ENCODE measurements at regions of chr14 and their contacts with region 1.

Region 1: GRCh38 chr14:100645192-100645990 is 58.2 kb upstream of the BEGAIN start:
- DNase-seq: peak; percentile 72 to 82
- ATAC-seq: peak; percentile 67 to 86 (median 80)
- H3K4me3 ChIP-seq: no peak overlapping the region
- H3K27ac ChIP-seq: no peak overlapping the region
- H3K4me1 ChIP-seq: no peaks in the 10 kb centered on the region
- H3K27me3 ChIP-seq: peaks cover 0 to 7% (median 2%) of the 10 kb centered on the region in 3 donors
- CTCF ChIP-seq: peak; percentile 61

Region 2: GRCh38 chr14:100383727-100384158 is 261.6 kb before region 1 on chr14:
- intact Hi-C with region 1: loop called (anchors 5 kb)
- DNase-seq: peak; percentile 55 to 72
- ATAC-seq: peak; percentile 67 to 87 (median 80)
- H3K4me3 ChIP-seq: no peak overlapping the region
- H3K27ac ChIP-seq: no peak overlapping the region
- H3K4me1 ChIP-seq: peaks cover 13% of the 10 kb centered on the region
- H3K27me3 ChIP-seq: no peaks in the 10 kb centered on the region
- CTCF ChIP-seq: peak; percentile 77

Region 3: DNA sequence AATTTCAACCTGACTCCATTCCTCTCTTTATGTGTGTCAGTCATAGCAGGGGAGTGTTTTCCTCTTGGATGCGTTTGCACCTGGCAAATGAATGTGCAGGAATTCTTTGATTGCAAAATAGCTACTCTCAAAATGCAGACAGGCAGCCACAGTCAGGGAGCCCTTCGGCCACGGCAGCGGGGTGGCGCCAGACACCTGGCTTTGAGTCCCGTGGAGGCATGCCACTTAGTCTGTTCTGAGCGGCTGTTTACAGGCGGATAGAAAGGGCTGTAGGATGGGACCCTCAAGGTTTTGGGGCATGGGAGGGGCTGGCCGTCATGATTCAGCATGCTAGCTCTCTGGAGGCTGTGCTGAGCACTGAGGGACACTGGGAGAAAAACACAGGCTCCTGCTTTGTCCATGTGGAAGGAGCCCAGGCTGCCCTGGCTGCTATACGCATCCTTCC is 205.2 kb before region 1 on chr14:
- intact Hi-C with region 1: loop called (anchors 1 to 5 kb)
- DNase-seq: peak; percentile 76 to 86
- ATAC-seq: peak; percentile 93 to 98 (median 96)
- H3K4me3 ChIP-seq: no peak overlapping the region
- H3K27ac ChIP-seq: peak overlapping the region; percentile 21
- H3K4me1 ChIP-seq: peaks cover 16% of the 10 kb centered on the region
- H3K27me3 ChIP-seq: no peaks in the 10 kb centered on the region
- CTCF ChIP-seq: peak; percentile 79